Gastrocnemius medialis (tissue), 4 donors: ENCODE measurements at regions of chr11 and their contacts with region 1.

Region 1: DNA sequence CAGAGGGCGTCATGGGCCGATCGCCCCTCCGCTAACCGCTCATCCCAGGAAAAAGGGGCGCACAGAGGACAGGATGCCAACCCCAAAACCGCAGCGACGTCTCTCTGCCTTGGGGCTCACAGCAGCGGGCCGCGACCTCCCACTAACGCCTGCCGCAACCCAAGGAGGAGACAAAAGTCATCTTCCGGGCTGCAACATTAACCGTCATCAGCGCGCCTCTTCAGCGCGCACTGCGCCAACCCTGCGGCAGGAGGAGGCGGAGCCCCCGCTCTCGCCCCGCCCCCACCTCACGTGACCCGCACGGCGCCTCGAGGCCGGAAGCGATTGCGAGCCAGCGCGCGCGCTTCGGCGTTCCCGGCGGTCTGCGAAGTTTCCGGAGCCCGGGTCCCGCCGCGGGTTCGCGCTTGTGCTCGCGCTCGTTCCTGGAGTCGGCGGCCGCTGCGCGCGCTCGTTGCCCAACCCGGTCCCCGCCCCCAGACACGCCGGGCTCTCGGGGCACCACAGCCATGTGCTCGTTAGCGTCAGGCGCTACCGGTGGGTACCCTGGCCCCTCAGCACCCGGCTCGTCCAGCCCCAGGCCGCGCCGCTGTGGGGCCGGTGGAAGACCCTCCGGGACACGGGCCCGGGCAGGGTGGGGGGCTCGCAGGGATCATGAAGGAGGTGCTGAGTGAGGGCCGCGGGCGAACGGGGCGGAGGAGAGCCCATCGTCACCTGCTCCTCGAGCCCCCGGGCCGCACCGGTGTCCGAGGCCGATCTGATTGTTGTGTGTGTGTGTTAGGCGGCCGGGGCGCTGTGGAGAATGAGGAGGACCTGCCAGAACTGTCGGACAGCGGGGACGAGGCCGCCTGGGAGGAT is at the start of gene PRMT3:
- DNase-seq: peak; percentile 90 to 92
- ATAC-seq: peak; percentile 95 to 96
- H3K4me3 ChIP-seq: peak within 1 kb of the TSS; percentile 87 to 96 (median 92)
- H3K27ac ChIP-seq: peak within 1 kb of the TSS; percentile 89 to 96 (median 94)
- H3K4me1 ChIP-seq: peaks cover 10 to 13% of the 10 kb centered on the region in 2 donors
- H3K27me3 ChIP-seq: no peaks in the 10 kb centered on the region
- CTCF ChIP-seq: peak; percentile 95 to 99 (median 98)
- POLR2A ChIP-seq: peak; percentile 73 to 77
- total RNA-seq, gene PRMT3: 14.0 to 20.1 (median 17.0) TPM

Region 2: GRCh38 chr11:19698493-19699292 is 688.8 kb before region 1 on chr11:
- in situ Hi-C with region 1: no loop called
- intact Hi-C with region 1: loop called (anchors 5 kb)
- DNase-seq: peak; percentile 88 to 94
- ATAC-seq: peak; percentile 94 to 95
- H3K4me3 ChIP-seq: no peak overlapping the region
- H3K27ac ChIP-seq: peak overlapping the region; percentile 53 to 72 (median 70)
- H3K4me1 ChIP-seq: peaks cover 39 to 40% of the 10 kb centered on the region in 2 donors
- H3K27me3 ChIP-seq: no peaks in the 10 kb centered on the region
- CTCF ChIP-seq: no peak
- POLR2A ChIP-seq: no peak

Region 3: GRCh38 chr11:20056109-20056949 is 331.1 kb before region 1 on chr11:
- in situ Hi-C with region 1: no loop called
- intact Hi-C with region 1: no loop called
- DNase-seq: peak; percentile 58
- ATAC-seq: peak; percentile 54 to 74
- H3K4me3 ChIP-seq: no peak overlapping the region
- H3K27ac ChIP-seq: peak overlapping the region; percentile 67 to 87 (median 79)
- H3K4me1 ChIP-seq: peaks cover 34 to 45% of the 10 kb centered on the region in 2 donors
- H3K27me3 ChIP-seq: no peaks in the 10 kb centered on the region
- CTCF ChIP-seq: no peak
- POLR2A ChIP-seq: no peak

Region 4: GRCh38 chr11:20207781-20208621 is 179.5 kb before region 1 on chr11:
- in situ Hi-C with region 1: no loop called
- intact Hi-C with region 1: no loop called
- DNase-seq: no peak
- ATAC-seq: no peak
- H3K4me3 ChIP-seq: no peak overlapping the region
- H3K27ac ChIP-seq: no peak overlapping the region
- H3K4me1 ChIP-seq: no peaks in the 10 kb centered on the region
- H3K27me3 ChIP-seq: peaks cover 0 to 3% (median 0%) of the 10 kb centered on the region in 3 donors
- CTCF ChIP-seq: no peak
- POLR2A ChIP-seq: no peak

Region 5: GRCh38 chr11:20363500-20364411 is 23.7 kb before region 1 on chr11 and contains the start of gene HTATIP2:
- in situ Hi-C with region 1: no loop called
- intact Hi-C with region 1: loop called (anchors 1 kb)
- DNase-seq: peak; percentile 63 to 64
- ATAC-seq: peak; percentile 86 to 90
- H3K4me3 ChIP-seq: peak within 1 kb of the TSS; percentile 73 to 98 (median 84)
- H3K27ac ChIP-seq: peak within 1 kb of the TSS; percentile 75 to 97 (median 90)
- H3K4me1 ChIP-seq: peaks cover 12 to 35% of the 10 kb centered on the region in 2 donors
- H3K27me3 ChIP-seq: no peaks in the 10 kb centered on the region
- CTCF ChIP-seq: no peak
- POLR2A ChIP-seq: peak; percentile 64 to 77
- total RNA-seq, gene HTATIP2: 61.6 to 87.2 (median 75.8) TPM

Region 6: DNA sequence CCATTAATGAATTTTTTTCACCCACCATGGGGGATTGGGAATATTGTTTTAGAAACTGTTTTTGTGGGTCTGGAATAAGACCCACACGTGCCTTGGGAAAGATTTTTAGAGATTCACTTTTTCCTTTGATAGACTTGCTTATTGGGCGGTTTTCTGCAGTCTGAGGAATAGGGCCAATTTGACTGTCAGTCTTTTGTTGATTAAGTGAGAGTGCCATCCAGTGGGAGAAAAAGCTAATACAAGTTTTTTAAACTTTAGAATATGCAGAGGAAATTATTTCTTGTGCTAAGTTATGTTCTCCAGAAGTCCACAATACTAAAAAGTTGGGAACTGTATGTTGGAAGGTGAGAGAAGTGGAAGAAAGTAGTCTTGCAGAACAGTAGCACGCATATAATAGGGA is 56.1 kb after region 1 on chr11:
- in situ Hi-C with region 1: no loop called
- intact Hi-C with region 1: loop called (anchors 10 kb)
- DNase-seq: no peak
- ATAC-seq: no peak
- H3K4me3 ChIP-seq: no peak overlapping the region
- H3K27ac ChIP-seq: no peak overlapping the region
- H3K4me1 ChIP-seq: no peaks in the 10 kb centered on the region
- H3K27me3 ChIP-seq: no peaks in the 10 kb centered on the region
- CTCF ChIP-seq: no peak
- POLR2A ChIP-seq: no peak

Region 7: DNA sequence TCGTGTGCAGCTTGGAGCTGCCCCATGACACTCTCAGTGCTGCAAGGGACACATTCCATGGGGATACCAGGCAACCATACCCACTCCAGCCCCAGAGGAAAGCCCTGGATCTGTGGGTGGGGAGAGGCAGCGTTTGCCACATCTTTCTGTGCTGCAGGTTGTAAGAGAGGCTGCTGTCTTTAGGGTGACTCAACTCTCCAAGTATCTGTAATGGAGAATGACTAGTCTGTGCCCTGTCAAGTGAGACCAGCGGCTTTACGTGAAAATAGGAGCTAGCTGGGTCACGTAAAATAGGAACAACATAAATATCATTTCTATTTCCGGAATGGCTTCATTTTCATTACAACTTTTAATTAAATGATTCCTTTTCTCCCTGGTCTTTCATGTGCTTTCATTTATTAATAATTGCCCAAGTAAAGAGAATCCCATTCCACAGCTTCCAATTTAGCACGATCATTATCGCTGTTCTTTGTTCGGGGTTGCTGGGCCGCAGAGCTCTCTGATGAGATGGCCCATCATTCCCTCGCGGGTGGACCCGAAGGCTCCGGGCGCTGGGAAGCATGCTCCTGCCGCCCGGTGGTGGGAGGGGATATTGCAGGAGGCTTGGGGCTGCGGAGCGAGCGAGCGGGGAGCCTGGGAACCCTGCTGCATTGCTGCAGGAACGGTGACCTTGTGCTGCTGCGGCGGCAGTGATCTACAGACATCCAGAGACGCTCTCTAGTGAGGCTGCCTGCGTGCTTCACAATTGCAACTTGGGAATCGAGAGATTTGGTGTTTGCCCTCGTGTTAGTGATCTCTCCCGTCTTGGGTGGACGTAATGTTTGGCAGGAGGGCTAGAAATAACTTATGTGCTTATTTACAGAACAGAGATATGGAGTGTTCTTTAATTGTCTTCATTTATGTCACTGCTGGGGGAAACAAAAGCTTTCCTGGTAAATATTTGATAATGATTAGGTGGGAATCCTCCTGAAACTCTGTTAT is 222.5 kb after region 1 on chr11:
- in situ Hi-C with region 1: loop called in 3 of 4 experiments (anchors 10 to 25 kb)
- intact Hi-C with region 1: loop called (anchors 1 kb)
- DNase-seq: peak; percentile 15 to 27
- ATAC-seq: peak in 1 of 2 donors; percentile 70
- H3K4me3 ChIP-seq: no peak overlapping the region
- H3K27ac ChIP-seq: no peak overlapping the region
- H3K4me1 ChIP-seq: peaks cover 0 to 4% of the 10 kb centered on the region in 2 donors
- H3K27me3 ChIP-seq: peaks cover 21 to 34% (median 28%) of the 10 kb centered on the region in 3 donors
- CTCF ChIP-seq: peak; percentile 71 to 88 (median 79)
- POLR2A ChIP-seq: no peak

Region 8: GRCh38 chr11:22192642-22193347 is 1805.3 kb after region 1 on chr11 and contains the start of gene ANO5:
- in situ Hi-C with region 1: no loop called
- intact Hi-C with region 1: loop called (anchors 2 kb)
- DNase-seq: peak; percentile 92 to 95
- ATAC-seq: peak; percentile 81 to 84
- H3K4me3 ChIP-seq: peak within 1 kb of the TSS; percentile 85 to 96 (median 92)
- H3K27ac ChIP-seq: peak within 1 kb of the TSS; percentile 92 to 99 (median 98)
- H3K4me1 ChIP-seq: peaks cover 21 to 26% of the 10 kb centered on the region in 2 donors
- H3K27me3 ChIP-seq: no peaks in the 10 kb centered on the region
- CTCF ChIP-seq: no peak
- POLR2A ChIP-seq: peak; percentile 90 to 95
- total RNA-seq, gene ANO5: 18.8 to 71.2 (median 35.4) TPM